ENCODE measurements at regions of chr4 and their contacts with region 1.

Region 1: DNA sequence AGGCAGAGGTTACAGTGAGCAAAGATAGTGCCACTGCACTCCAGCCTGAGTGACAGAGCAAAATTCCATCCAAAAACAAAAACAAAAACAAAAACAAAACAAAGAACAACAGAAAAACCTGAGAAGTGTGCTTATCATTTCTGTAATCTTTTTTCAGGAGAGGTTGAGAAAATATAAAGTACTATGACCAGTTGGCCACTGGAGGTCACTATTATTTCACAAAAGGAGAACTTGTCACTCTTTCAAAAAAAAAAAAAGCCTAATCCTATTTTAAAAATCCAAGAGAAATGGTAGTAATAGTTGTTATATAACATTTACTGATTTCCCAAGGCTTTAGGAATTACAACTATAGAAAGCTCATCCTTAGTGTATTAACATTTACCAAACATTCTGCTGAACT is 24.9 kb upstream of the RNF150 start:
- DNase-seq: peak; percentile 37
- H3K4me3 ChIP-seq: no peak overlapping the region
- H3K27ac ChIP-seq: no peak overlapping the region
- H3K4me1 ChIP-seq: no peaks in the 10 kb centered on the region
- H3K27me3 ChIP-seq: peaks cover under 1 to 3% of the 10 kb centered on the region in 2 experiments
- CTCF ChIP-seq: peak in 1 of 2 donors; percentile 28
- POLR2A ChIP-seq: no peak

Region 2: GRCh38 chr4:141170671-141171070 is 12.5 kb after region 1 on chr4:
- CTCF ChIA-PET with region 1: no interaction called
- POLR2A ChIA-PET with region 1: no interaction called
- dilution Hi-C with region 1: no loop called
- intact Hi-C with region 1: no loop called
- DNase-seq: no peak
- H3K4me3 ChIP-seq: no peak overlapping the region
- H3K27ac ChIP-seq: no peak overlapping the region
- H3K4me1 ChIP-seq: no peaks in the 10 kb centered on the region
- H3K27me3 ChIP-seq: no peaks in the 10 kb centered on the region
- CTCF ChIP-seq: no peak
- POLR2A ChIP-seq: no peak

Region 3: GRCh38 chr4:141180991-141181761 is 23.0 kb after region 1 on chr4:
- CTCF ChIA-PET with region 1: no interaction called
- POLR2A ChIA-PET with region 1: no interaction called
- dilution Hi-C with region 1: no loop called
- intact Hi-C with region 1: no loop called
- DNase-seq: no peak
- H3K4me3 ChIP-seq: no peak overlapping the region
- H3K27ac ChIP-seq: no peak overlapping the region
- H3K4me1 ChIP-seq: no peaks in the 10 kb centered on the region
- H3K27me3 ChIP-seq: no peaks in the 10 kb centered on the region
- CTCF ChIP-seq: no peak
- POLR2A ChIP-seq: no peak

Region 4: GRCh38 chr4:141220655-141221605 is 62.7 kb after region 1 on chr4 and contains the start of gene ZNF330:
- CTCF ChIA-PET with region 1: no interaction called
- POLR2A ChIA-PET with region 1: no interaction called
- dilution Hi-C with region 1: no loop called
- intact Hi-C with region 1: loop called (anchors 2 kb)
- DNase-seq: peak; percentile 93
- H3K4me3 ChIP-seq: peak within 1 kb of the TSS; percentile 92 to 99 (median 97)
- H3K27ac ChIP-seq: peak within 1 kb of the TSS; percentile 71
- H3K4me1 ChIP-seq: peaks cover 10% of the 10 kb centered on the region
- H3K27me3 ChIP-seq: peaks cover 0 to under 1% of the 10 kb centered on the region in 2 experiments
- CTCF ChIP-seq: peak; percentile 4 to 16
- POLR2A ChIP-seq: peak; percentile 69
- total RNA-seq, gene ZNF330: 31.0 and 34.2 TPM in 2 replicates

Region 5: DNA sequence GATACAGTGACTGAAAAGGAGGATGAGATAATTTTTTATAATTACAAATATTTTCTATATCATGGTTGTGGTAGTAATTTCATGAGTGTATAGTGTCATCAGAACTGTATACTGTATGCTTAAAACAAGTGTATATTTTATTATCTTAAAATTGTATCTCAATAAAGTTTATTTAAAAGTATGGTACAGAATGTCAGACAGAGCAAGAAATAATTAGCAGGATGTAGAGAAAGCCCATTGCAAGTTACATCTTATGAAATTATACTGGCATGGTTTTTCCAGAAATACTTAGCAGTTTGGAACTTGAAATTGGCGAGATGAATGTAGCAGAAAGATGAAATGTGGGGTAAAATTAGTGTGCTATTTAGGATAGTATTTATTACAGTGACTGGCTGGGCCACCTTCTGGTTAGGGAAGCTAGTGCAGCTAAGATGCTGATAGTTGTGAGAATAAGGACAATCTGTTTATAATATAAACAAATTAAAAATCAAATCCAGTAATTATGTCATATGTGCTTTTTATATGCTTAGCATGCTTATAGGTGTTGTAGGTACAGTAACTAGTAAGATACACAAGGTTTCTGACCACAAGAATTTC is 552.9 kb after region 1 on chr4:
- CTCF ChIA-PET with region 1: no interaction called
- POLR2A ChIA-PET with region 1: no interaction called
- dilution Hi-C with region 1: no loop called
- intact Hi-C with region 1: loop called (anchors 2 kb)
- DNase-seq: peak; percentile 50
- H3K4me3 ChIP-seq: no peak overlapping the region
- H3K27ac ChIP-seq: no peak overlapping the region
- H3K4me1 ChIP-seq: peaks cover 4% of the 10 kb centered on the region
- H3K27me3 ChIP-seq: no peaks in the 10 kb centered on the region
- CTCF ChIP-seq: peak; percentile 40 to 52
- POLR2A ChIP-seq: no peak

Region 6: DNA sequence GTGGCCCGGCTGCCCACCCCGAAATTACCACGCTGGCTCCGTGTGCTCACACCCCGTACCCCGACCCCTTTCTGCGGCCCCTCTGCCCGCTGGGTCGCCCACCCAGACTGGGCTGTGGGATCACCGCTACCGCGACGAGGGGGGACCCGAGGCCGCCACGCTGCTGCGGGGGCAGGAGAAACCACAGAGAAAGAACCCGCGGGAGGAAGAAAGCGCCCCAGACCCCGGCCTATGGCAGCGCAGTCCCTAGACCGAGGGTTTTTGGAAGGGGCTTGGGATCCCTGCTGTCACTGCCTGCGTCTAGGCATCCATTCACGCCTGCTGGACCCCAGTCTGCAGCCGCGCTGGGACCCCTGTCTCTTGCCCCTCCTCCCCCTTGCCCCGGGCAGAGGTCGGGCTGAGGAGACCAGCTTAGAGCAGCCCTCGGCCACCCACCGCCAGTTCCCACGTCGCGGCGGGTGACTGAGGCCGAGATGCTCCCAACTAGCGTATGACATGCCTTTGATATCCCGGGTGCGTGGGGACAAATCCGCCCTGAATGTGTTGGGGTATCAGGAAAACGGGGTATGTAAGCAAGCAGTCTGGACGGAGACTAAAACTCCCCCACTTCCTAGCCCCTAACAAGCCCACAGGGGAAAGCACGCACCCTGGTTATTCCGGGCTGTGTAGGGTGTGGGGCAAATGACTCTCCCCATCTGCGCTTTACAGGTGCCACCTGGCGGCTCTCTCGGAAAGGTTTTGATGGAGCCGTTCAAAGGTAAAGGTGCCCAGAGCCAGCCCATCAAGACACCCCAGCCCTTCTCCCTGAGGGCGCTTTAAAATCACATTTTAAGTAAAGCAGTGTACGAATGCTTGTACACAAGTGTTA is 1688.7 kb after region 1 on chr4:
- CTCF ChIA-PET with region 1: interaction called, 3 read pairs
- POLR2A ChIA-PET with region 1: no interaction called
- dilution Hi-C with region 1: no loop called
- intact Hi-C with region 1: loop called (anchors 1 kb)
- DNase-seq: peak; percentile 18
- H3K4me3 ChIP-seq: peak overlapping the region; percentile 42 to 68 (median 61)
- H3K27ac ChIP-seq: no peak overlapping the region
- H3K4me1 ChIP-seq: no peaks in the 10 kb centered on the region
- H3K27me3 ChIP-seq: peaks cover 14 to 21% of the 10 kb centered on the region in 2 experiments
- CTCF ChIP-seq: peak in 1 of 2 donors; percentile 22
- POLR2A ChIP-seq: no peak

Region 7: DNA sequence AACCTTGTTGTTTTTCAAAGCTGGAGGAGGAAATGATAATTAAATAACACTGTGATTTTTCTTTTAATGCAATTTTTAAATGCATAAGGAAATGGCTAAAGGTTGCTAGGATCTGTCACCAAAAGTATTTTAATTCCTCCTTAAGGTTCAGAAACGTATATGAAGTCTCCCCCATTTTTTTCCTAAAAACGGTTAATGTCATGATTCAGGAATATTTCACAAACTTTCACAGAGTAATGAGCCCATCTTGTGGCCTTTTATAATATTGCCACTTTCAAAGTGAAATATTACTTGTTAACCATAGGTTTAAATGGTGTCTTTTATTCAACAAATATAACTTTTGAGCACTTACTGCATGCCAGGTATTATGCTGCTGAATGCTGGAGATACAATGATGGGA is 1927.0 kb after region 1 on chr4:
- CTCF ChIA-PET with region 1: no interaction called
- POLR2A ChIA-PET with region 1: no interaction called
- dilution Hi-C with region 1: no loop called
- intact Hi-C with region 1: loop called (anchors 5 kb)
- DNase-seq: peak; percentile 2
- H3K4me3 ChIP-seq: no peak overlapping the region
- H3K27ac ChIP-seq: no peak overlapping the region
- H3K4me1 ChIP-seq: no peaks in the 10 kb centered on the region
- H3K27me3 ChIP-seq: no peaks in the 10 kb centered on the region
- CTCF ChIP-seq: no peak
- POLR2A ChIP-seq: no peak